Caco-2 (cell line): ENCODE measurements at regions of chr11 and their contacts with region 1.

Region 1: GRCh38 chr11:96464700-96465307 is 75.0 kb downstream of the JRKL start:
- DNase-seq: peak in 1 of 2 experiments; percentile 66
- H3K4me3 ChIP-seq: no peak overlapping the region
- H3K4me3 Mint-ChIP-seq: no peak overlapping the region
- H3K27ac Mint-ChIP-seq: no peak overlapping the region
- H3K4me1 ChIP-seq: peaks cover 6% of the 10 kb centered on the region
- H3K4me1 Mint-ChIP-seq: no peaks in the 10 kb centered on the region
- H3K27me3 ChIP-seq: no peaks in the 10 kb centered on the region; the same call in 1 of the 2 replicates
- H3K27me3 Mint-ChIP-seq: peaks cover 12% of the 10 kb centered on the region
- CTCF ChIP-seq: peak; percentile 84 to 96

Region 2: GRCh38 chr11:96430668-96431067 is 34.1 kb before region 1 on chr11:
- CTCF ChIA-PET with region 1: no interaction called
- POLR2A ChIA-PET with region 1: no interaction called
- intact Hi-C with region 1: no loop called
- DNase-seq: no peak
- H3K4me3 ChIP-seq: no peak overlapping the region
- H3K4me3 Mint-ChIP-seq: no peak overlapping the region
- H3K27ac Mint-ChIP-seq: no peak overlapping the region
- H3K4me1 ChIP-seq: peaks cover 5% of the 10 kb centered on the region; the same call in 1 of the 2 replicates
- H3K4me1 Mint-ChIP-seq: no peaks in the 10 kb centered on the region
- H3K27me3 ChIP-seq: no peaks in the 10 kb centered on the region
- H3K27me3 Mint-ChIP-seq: peaks cover 13% of the 10 kb centered on the region
- CTCF ChIP-seq: no peak

Region 3: GRCh38 chr11:96524475-96524874 is 59.7 kb after region 1 on chr11:
- CTCF ChIA-PET with region 1: interaction called, 14 read pairs
- POLR2A ChIA-PET with region 1: no interaction called
- intact Hi-C with region 1: no loop called
- DNase-seq: no peak
- H3K4me3 ChIP-seq: no peak overlapping the region
- H3K4me3 Mint-ChIP-seq: no peak overlapping the region
- H3K27ac Mint-ChIP-seq: no peak overlapping the region
- H3K4me1 ChIP-seq: no peaks in the 10 kb centered on the region
- H3K4me1 Mint-ChIP-seq: no peaks in the 10 kb centered on the region
- H3K27me3 ChIP-seq: no peaks in the 10 kb centered on the region
- H3K27me3 Mint-ChIP-seq: peaks cover 3% of the 10 kb centered on the region
- CTCF ChIP-seq: peak in 1 of 2 experiments; percentile 11

Region 4: DNA sequence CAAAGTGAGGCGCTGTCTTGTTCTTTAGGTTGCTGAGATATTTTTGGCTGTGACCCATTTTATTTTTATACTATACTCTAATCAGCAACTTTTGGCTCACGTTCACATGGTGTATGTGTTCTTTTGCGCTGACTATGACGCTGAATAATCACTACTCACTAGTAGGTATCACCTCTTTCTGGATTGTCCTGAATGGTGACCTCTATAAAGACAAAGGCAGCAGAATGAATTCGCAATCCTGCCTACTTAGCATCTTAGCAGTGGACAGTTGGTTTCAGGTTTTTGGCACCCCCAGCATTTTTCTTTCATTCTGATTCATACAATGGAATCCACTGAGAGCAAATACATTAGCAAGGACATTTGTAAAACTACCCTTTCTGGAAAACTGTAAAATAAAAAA is 276.3 kb after region 1 on chr11:
- CTCF ChIA-PET with region 1: interaction called, 11 read pairs
- POLR2A ChIA-PET with region 1: no interaction called
- intact Hi-C with region 1: no loop called
- DNase-seq: no peak
- H3K4me3 ChIP-seq: no peak overlapping the region
- H3K4me3 Mint-ChIP-seq: no peak overlapping the region
- H3K27ac Mint-ChIP-seq: no peak overlapping the region
- H3K4me1 ChIP-seq: peaks cover 10% of the 10 kb centered on the region
- H3K4me1 Mint-ChIP-seq: peaks cover 12% of the 10 kb centered on the region
- H3K27me3 ChIP-seq: no peaks in the 10 kb centered on the region
- H3K27me3 Mint-ChIP-seq: peaks cover 3% of the 10 kb centered on the region
- CTCF ChIP-seq: no peak

Region 5: GRCh38 chr11:96905143-96905542 is 440.3 kb after region 1 on chr11:
- CTCF ChIA-PET with region 1: interaction called, 30 read pairs
- POLR2A ChIA-PET with region 1: no interaction called
- intact Hi-C with region 1: loop called (anchors 1 kb)
- DNase-seq: no peak
- H3K4me3 ChIP-seq: no peak overlapping the region
- H3K4me3 Mint-ChIP-seq: no peak overlapping the region
- H3K27ac Mint-ChIP-seq: no peak overlapping the region
- H3K4me1 ChIP-seq: no peaks in the 10 kb centered on the region
- H3K4me1 Mint-ChIP-seq: no peaks in the 10 kb centered on the region
- H3K27me3 ChIP-seq: no peaks in the 10 kb centered on the region
- H3K27me3 Mint-ChIP-seq: peaks cover 5% of the 10 kb centered on the region
- CTCF ChIP-seq: no peak

Region 6: DNA sequence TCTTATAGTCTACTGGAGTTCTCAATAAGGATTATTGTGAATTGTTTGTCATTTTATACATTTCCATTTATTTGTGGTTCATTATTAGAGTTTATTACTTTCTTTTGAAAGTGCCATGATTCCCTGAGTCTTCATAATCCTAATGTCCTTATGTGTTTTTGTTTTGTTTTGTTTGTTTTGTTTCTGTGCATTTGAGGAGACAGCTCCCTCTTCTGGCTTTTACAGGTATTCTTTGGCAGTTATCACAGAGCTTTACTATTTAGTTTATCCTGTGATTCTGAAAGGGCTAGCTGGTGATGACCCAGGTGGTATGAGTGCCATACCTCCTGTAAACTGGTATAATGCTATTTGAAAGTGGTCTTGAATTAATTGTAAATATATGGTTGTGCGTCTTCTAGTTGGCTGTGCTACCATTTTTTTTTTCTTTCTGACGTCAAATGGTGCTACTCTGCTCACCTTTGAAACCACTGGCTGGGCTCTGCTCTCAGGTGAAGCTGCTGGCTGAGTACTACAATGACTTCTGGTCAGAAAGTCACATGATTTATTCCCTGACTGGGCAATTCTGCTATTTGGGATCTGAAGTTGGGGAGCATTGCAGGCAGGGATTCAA is 676.2 kb after region 1 on chr11:
- CTCF ChIA-PET with region 1: interaction called, 75 read pairs
- POLR2A ChIA-PET with region 1: no interaction called
- intact Hi-C with region 1: loop called (anchors 1 kb)
- DNase-seq: peak in 1 of 2 experiments; percentile 55
- H3K4me3 ChIP-seq: no peak overlapping the region
- H3K4me3 Mint-ChIP-seq: no peak overlapping the region
- H3K27ac Mint-ChIP-seq: no peak overlapping the region
- H3K4me1 ChIP-seq: no peaks in the 10 kb centered on the region
- H3K4me1 Mint-ChIP-seq: no peaks in the 10 kb centered on the region
- H3K27me3 ChIP-seq: no peaks in the 10 kb centered on the region
- H3K27me3 Mint-ChIP-seq: no peaks in the 10 kb centered on the region
- CTCF ChIP-seq: peak; percentile 78 to 82